CD8-positive, alpha-beta T cell (primary cell): ENCODE measurements at regions of chr1 and their contacts with region 1.

Region 1: GRCh38 chr1:181142096-181142958 is 53.8 kb downstream of the IER5 start:
- DNase-seq: peak; percentile 76 to 94 (median 88)
- ATAC-seq: peak; percentile 99
- H3K4me3 ChIP-seq: no peak overlapping the region
- H3K4me3 Mint-ChIP-seq: no peak overlapping the region
- H3K27ac ChIP-seq: no peak overlapping the region
- H3K27ac Mint-ChIP-seq: peak overlapping the region; percentile 19
- H3K4me1 ChIP-seq: peaks cover 17% of the 10 kb centered on the region
- H3K4me1 Mint-ChIP-seq: peaks cover 25% of the 10 kb centered on the region
- H3K27me3 ChIP-seq: no peaks in the 10 kb centered on the region
- H3K27me3 Mint-ChIP-seq: no peaks in the 10 kb centered on the region
- CTCF ChIP-seq: peak; percentile 98

Region 2: DNA sequence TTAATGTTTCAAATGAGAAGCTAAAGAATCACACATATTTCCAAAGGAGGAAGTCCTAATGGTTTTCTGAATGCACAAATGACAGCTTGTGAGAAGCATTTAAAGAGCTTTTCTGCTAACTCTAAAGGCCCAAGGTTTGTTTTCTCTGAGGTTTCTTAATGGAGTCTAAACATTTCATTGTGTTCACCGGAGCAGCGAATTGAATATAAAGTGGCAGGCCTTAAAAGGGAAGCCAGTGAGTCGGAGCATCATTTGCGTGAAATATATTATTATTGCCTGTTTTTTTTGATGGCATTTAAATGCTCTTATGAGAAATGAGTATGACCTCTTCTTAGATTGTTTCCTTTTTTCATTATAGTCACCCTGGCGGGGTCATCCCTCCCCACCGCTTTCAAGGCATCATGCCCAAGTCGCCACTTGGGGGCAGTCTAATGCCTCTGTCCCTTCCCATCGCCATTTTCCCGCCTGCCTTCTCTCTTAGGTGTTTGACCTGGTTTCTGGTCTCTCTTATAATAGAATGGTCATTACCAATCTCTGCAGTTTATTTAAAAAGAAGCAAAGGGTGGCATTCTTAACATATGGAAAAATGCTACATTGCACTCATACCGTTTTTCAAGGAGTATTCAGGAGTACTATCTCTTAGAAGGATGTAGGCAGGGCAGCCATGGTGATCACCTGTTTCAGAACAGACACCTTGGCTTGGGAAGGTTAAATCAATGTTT is 608.9 kb before region 1 on chr1:
- CTCF ChIA-PET with region 1: no interaction called
- POLR2A ChIA-PET with region 1: no interaction called
- intact Hi-C with region 1: loop called in 1 of 2 experiments (anchors 5 kb)
- DNase-seq: peak; percentile 13 to 71 (median 60)
- ATAC-seq: peak; percentile 71
- H3K4me3 ChIP-seq: no peak overlapping the region
- H3K4me3 Mint-ChIP-seq: no peak overlapping the region
- H3K27ac ChIP-seq: no peak overlapping the region
- H3K27ac Mint-ChIP-seq: no peak overlapping the region
- H3K4me1 ChIP-seq: no peaks in the 10 kb centered on the region
- H3K4me1 Mint-ChIP-seq: no peaks in the 10 kb centered on the region
- H3K27me3 ChIP-seq: no peaks in the 10 kb centered on the region
- H3K27me3 Mint-ChIP-seq: peaks cover 7% of the 10 kb centered on the region
- CTCF ChIP-seq: peak; percentile 59

Region 3: DNA sequence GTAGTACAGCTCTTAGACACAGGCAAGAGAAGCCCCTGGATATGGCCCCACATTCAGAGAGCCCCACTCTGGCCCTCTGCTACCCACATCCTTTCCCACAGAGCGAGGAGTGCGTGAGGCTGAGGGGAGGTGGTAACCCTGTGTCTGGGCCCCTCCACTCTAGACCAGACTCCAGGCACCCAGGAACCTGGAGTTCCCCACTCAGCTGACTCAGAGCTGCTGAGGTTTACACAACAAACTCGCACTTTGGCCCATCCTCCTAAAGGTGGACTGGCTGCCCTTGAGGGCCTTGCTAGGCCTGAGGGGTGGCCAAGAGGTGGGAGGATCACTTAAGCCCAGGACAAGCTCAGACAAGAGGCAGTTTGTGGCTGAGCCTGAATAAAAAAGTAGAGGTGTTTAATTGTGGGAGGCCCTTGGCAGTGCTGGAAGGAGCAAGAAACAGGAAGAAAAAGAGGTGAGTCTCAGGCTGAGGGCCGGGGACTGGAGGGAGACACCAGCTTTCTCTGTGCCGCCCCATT is 97.8 kb before region 1 on chr1:
- CTCF ChIA-PET with region 1: interaction called, 96 read pairs
- POLR2A ChIA-PET with region 1: no interaction called
- intact Hi-C with region 1: no loop called
- DNase-seq: peak in 6 of 9 experiments; percentile 22 to 79 (median 50)
- ATAC-seq: peak; percentile 92
- H3K4me3 ChIP-seq: no peak overlapping the region
- H3K4me3 Mint-ChIP-seq: peak overlapping the region; percentile 21
- H3K27ac ChIP-seq: peak overlapping the region in 1 of 2 experiments; percentile 33
- H3K27ac Mint-ChIP-seq: peak overlapping the region; percentile 91
- H3K4me1 ChIP-seq: peaks cover 22% of the 10 kb centered on the region
- H3K4me1 Mint-ChIP-seq: peaks cover 45% of the 10 kb centered on the region
- H3K27me3 ChIP-seq: no peaks in the 10 kb centered on the region
- H3K27me3 Mint-ChIP-seq: no peaks in the 10 kb centered on the region
- CTCF ChIP-seq: no peak

Region 4: DNA sequence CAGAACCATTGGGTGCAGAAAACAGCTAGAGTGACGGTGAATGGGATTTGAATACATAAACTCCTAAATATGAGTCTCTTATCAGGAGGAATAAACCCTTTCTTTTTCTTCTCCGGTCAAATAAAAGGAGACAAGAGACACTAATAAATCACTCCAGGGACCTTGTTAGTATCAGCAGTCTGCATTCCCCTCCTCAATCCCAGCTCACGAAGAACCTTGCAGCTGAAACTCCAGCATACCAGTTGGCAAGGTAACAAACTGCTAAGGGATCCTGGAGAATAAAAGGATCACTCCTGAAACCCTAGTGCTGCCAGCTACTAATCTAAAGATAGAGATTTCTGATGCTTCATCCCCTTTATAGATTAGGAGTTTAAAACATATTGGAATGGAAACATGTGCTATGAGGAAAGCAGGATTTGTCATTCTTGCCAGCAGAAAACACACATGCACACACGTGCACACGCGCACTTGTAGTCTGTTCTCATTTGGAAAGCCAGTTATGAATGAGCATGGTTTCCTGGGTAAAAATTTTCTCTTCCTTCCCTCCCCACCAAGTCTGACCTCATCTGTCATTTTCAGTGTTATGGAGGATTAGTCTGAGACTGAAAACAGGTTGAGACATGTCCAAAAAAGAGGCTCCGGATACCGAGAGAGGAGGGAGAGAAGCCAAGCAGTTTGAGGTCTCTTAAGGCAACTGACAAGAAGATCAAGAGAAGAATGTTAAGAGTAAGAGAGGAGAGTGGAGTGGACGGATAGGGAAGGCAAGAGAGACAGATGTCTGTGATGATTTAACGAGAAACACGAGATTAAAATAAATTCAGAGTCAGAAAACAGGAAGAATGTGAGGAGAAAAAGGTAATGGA is 42.9 kb before region 1 on chr1:
- CTCF ChIA-PET with region 1: interaction called, 78 read pairs
- POLR2A ChIA-PET with region 1: no interaction called
- intact Hi-C with region 1: loop called (anchors 2 kb)
- DNase-seq: no peak
- ATAC-seq: peak; percentile 24
- H3K4me3 ChIP-seq: no peak overlapping the region
- H3K4me3 Mint-ChIP-seq: no peak overlapping the region
- H3K27ac ChIP-seq: no peak overlapping the region
- H3K27ac Mint-ChIP-seq: peak overlapping the region; percentile 22
- H3K4me1 ChIP-seq: peaks cover 18% of the 10 kb centered on the region
- H3K4me1 Mint-ChIP-seq: peaks cover 34% of the 10 kb centered on the region
- H3K27me3 ChIP-seq: no peaks in the 10 kb centered on the region
- H3K27me3 Mint-ChIP-seq: no peaks in the 10 kb centered on the region
- CTCF ChIP-seq: no peak

Region 5: GRCh38 chr1:181128592-181129497 is 13.5 kb before region 1 on chr1:
- CTCF ChIA-PET with region 1: interaction called, 28 read pairs
- POLR2A ChIA-PET with region 1: no interaction called
- intact Hi-C with region 1: no loop called
- DNase-seq: peak in 1 of 9 experiments; percentile 28
- ATAC-seq: no peak
- H3K4me3 ChIP-seq: no peak overlapping the region
- H3K4me3 Mint-ChIP-seq: no peak overlapping the region
- H3K27ac ChIP-seq: no peak overlapping the region
- H3K27ac Mint-ChIP-seq: no peak overlapping the region
- H3K4me1 ChIP-seq: no peaks in the 10 kb centered on the region
- H3K4me1 Mint-ChIP-seq: peaks cover 8% of the 10 kb centered on the region
- H3K27me3 ChIP-seq: no peaks in the 10 kb centered on the region
- H3K27me3 Mint-ChIP-seq: peaks cover 3% of the 10 kb centered on the region
- CTCF ChIP-seq: no peak

Region 6: GRCh38 chr1:181326348-181326747 is 184.0 kb after region 1 on chr1:
- CTCF ChIA-PET with region 1: no interaction called
- POLR2A ChIA-PET with region 1: no interaction called
- intact Hi-C with region 1: no loop called
- DNase-seq: peak in 1 of 9 experiments; percentile 27
- ATAC-seq: no peak
- H3K4me3 ChIP-seq: no peak overlapping the region
- H3K4me3 Mint-ChIP-seq: no peak overlapping the region
- H3K27ac ChIP-seq: no peak overlapping the region
- H3K27ac Mint-ChIP-seq: no peak overlapping the region
- H3K4me1 ChIP-seq: peaks cover 9% of the 10 kb centered on the region
- H3K4me1 Mint-ChIP-seq: peaks cover 16% of the 10 kb centered on the region
- H3K27me3 ChIP-seq: no peaks in the 10 kb centered on the region
- H3K27me3 Mint-ChIP-seq: peaks cover 3% of the 10 kb centered on the region
- CTCF ChIP-seq: no peak